ENCODE measurements at regions of chr5 and their contacts with region 1.

Region 1: GRCh38 chr5:74576941-74577456 is 63.5 kb downstream of the ENC1 start:
- DNase-seq: peak; percentile 22
- ATAC-seq: peak; percentile 34
- H3K4me3 Mint-ChIP-seq: no peak overlapping the region
- H3K27ac Mint-ChIP-seq: peak overlapping the region; percentile 58
- H3K4me1 Mint-ChIP-seq: peaks cover 47% of the 10 kb centered on the region
- H3K27me3 Mint-ChIP-seq: no peaks in the 10 kb centered on the region

Region 2: DNA sequence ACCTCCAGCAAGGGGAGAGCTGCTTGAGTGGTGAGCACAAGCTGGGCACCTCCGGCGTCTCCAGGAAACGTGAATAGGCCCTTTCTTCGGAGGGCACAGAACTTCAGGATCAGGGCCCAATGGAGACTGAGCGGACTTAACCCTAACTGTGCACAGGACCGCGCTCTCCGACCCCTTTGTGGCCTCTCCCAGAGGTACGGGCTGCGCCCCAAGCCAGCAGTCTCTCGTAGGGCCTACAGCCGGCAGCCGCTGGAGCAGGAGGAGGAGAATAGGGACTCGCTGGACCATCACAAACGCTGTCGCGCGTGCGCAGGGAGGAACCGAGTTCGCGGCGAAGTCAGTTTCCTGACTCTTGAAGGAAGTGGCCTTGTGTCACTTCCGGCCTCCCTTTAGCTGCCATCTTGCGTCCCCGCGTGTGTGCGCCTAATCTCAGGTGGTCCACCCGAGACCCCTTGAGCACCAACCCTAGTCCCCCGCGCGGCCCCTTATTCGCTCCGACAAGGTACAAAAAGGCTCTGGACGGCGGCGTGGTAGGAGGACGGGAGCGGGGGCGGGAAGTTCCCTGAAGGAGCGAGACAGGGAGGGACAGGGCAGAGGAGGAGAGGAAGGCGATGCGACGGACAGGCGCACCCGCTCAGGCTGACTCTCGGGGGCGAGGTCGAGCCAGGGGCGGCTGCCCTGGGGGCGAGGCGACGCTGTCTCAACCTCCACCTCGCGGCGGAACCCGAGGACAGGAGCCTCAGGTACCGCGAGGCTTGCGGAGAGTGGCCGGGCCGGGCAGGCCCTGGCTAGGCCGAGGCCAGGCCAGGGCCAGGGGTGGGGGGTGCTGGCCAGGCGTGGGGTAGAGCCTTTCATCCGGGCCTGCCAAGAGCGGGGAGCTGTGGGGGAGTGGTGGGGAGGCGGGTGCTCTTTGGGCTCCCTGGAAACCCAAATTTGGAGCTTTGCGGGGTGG is 1078.7 kb before region 1 on chr5 and contains the start of gene BTF3:
- CTCF ChIA-PET with region 1: no interaction called
- POLR2A ChIA-PET with region 1: no interaction called
- intact Hi-C with region 1: loop called in 1 of 2 experiments (anchors 10 kb)
- DNase-seq: peak; percentile 96
- ATAC-seq: peak; percentile 95
- H3K4me3 Mint-ChIP-seq: peak within 1 kb of the TSS; percentile 87
- H3K27ac Mint-ChIP-seq: peak within 1 kb of the TSS; percentile 98
- H3K4me1 Mint-ChIP-seq: peaks cover 35% of the 10 kb centered on the region
- H3K27me3 Mint-ChIP-seq: peaks cover 2% of the 10 kb centered on the region
- total RNA-seq, gene BTF3: 1,030 to 1,213 TPM

Region 3: GRCh38 chr5:74240786-74241750 is 335.9 kb before region 1 on chr5:
- CTCF ChIA-PET with region 1: interaction called, 3 read pairs
- POLR2A ChIA-PET with region 1: no interaction called
- intact Hi-C with region 1: loop called in 1 of 2 experiments (anchors 1 kb)
- DNase-seq: peak; percentile 34
- ATAC-seq: peak; percentile 83
- H3K4me3 Mint-ChIP-seq: no peak overlapping the region
- H3K27ac Mint-ChIP-seq: no peak overlapping the region
- H3K4me1 Mint-ChIP-seq: peaks cover 5% of the 10 kb centered on the region
- H3K27me3 Mint-ChIP-seq: peaks cover 16% of the 10 kb centered on the region

Region 4: DNA sequence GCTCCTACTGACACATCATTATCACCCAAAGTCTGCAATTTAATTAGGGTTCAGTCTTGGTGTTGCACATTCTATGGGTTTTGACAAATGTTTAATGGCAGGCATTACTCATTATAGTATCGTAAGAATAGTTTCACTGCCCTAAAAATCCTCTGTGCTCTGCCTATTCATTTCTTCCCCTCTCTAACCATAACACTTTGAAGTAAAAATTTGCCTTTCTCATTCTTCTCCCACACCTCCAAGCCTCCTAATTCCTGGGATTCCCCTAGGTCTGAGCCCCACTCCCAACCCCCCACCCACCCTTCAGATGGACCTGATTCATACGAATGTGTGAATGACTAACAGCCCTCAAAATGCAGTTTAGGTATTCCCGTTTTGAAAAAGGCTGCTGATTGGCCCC is 45.1 kb after region 1 on chr5:
- CTCF ChIA-PET with region 1: no interaction called
- POLR2A ChIA-PET with region 1: no interaction called
- intact Hi-C with region 1: loop called (anchors 1 kb)
- DNase-seq: peak; percentile 59
- ATAC-seq: peak; percentile 93
- H3K4me3 Mint-ChIP-seq: no peak overlapping the region
- H3K27ac Mint-ChIP-seq: no peak overlapping the region
- H3K4me1 Mint-ChIP-seq: peaks cover 20% of the 10 kb centered on the region
- H3K27me3 Mint-ChIP-seq: peaks cover 39% of the 10 kb centered on the region

Region 5: GRCh38 chr5:74640450-74640953 is 63.5 kb after region 1 on chr5 and contains the start of gene ENC1:
- CTCF ChIA-PET with region 1: interaction called, 4 read pairs
- POLR2A ChIA-PET with region 1: interaction called, 7 read pairs
- intact Hi-C with region 1: loop called (anchors 1 to 2 kb)
- DNase-seq: peak; percentile 88
- ATAC-seq: peak; percentile 80
- H3K4me3 Mint-ChIP-seq: peak within 1 kb of the TSS; percentile 72
- H3K27ac Mint-ChIP-seq: peak within 1 kb of the TSS; percentile 20
- H3K4me1 Mint-ChIP-seq: peaks cover 32% of the 10 kb centered on the region
- H3K27me3 Mint-ChIP-seq: peaks cover 15% of the 10 kb centered on the region
- total RNA-seq, gene ENC1: 0.48 to 0.67 TPM

Region 6: GRCh38 chr5:74766849-74767578 is 190.0 kb after region 1 on chr5 and contains the starts of genes GFM2 and NSA2:
- CTCF ChIA-PET with region 1: no interaction called
- POLR2A ChIA-PET with region 1: no interaction called
- intact Hi-C with region 1: loop called in 1 of 2 experiments (anchors 5 kb)
- DNase-seq: peak; percentile 95
- ATAC-seq: peak; percentile 85
- H3K4me3 Mint-ChIP-seq: peak within 1 kb of the TSS; percentile 94
- H3K27ac Mint-ChIP-seq: peak within 1 kb of the TSS; percentile 99
- H3K4me1 Mint-ChIP-seq: peaks cover 34% of the 10 kb centered on the region
- H3K27me3 Mint-ChIP-seq: no peaks in the 10 kb centered on the region
- total RNA-seq, gene GFM2: 34.7 to 40.4 TPM
- total RNA-seq, gene NSA2: 163 to 253 TPM

Region 7: GRCh38 chr5:75566710-75567309 is 989.8 kb after region 1 on chr5:
- CTCF ChIA-PET with region 1: no interaction called
- POLR2A ChIA-PET with region 1: no interaction called
- intact Hi-C with region 1: loop called in 1 of 2 experiments (anchors 5 kb)
- DNase-seq: peak; percentile 78
- ATAC-seq: peak; percentile 85
- H3K4me3 Mint-ChIP-seq: peak overlapping the region; percentile 56
- H3K27ac Mint-ChIP-seq: peak overlapping the region; percentile 96
- H3K4me1 Mint-ChIP-seq: peaks cover 63% of the 10 kb centered on the region
- H3K27me3 Mint-ChIP-seq: no peaks in the 10 kb centered on the region